ENCODE measurements at regions of chr11 and their contacts with region 1.

Region 1: GRCh38 chr11:91023731-91024130 is 800.9 kb upstream of the CHORDC1 start:
- DNase-seq: no peak
- H3K4me3 ChIP-seq: no peak overlapping the region
- H3K4me3 Mint-ChIP-seq: no peak overlapping the region
- H3K27ac ChIP-seq: no peak overlapping the region
- H3K27ac Mint-ChIP-seq: no peak overlapping the region
- H3K4me1 ChIP-seq: no peaks in the 10 kb centered on the region
- H3K4me1 Mint-ChIP-seq: no peaks in the 10 kb centered on the region
- H3K27me3 ChIP-seq: no peaks in the 10 kb centered on the region
- H3K27me3 Mint-ChIP-seq: no peaks in the 10 kb centered on the region

Region 2: GRCh38 chr11:90997241-90997640 is 26.5 kb before region 1 on chr11:
- CTCF ChIA-PET with region 1: no interaction called
- POLR2A ChIA-PET with region 1: no interaction called
- intact Hi-C with region 1: loop called (anchors 2 kb)
- DNase-seq: no peak
- H3K4me3 ChIP-seq: no peak overlapping the region
- H3K4me3 Mint-ChIP-seq: no peak overlapping the region
- H3K27ac ChIP-seq: no peak overlapping the region
- H3K27ac Mint-ChIP-seq: no peak overlapping the region
- H3K4me1 ChIP-seq: no peaks in the 10 kb centered on the region
- H3K4me1 Mint-ChIP-seq: no peaks in the 10 kb centered on the region
- H3K27me3 ChIP-seq: no peaks in the 10 kb centered on the region
- H3K27me3 Mint-ChIP-seq: no peaks in the 10 kb centered on the region

Measured in CD4-positive, alpha-beta memory T cell (primary cell).